ENCODE measurements at regions of chr15 and their contacts with region 1.

Region 1: DNA sequence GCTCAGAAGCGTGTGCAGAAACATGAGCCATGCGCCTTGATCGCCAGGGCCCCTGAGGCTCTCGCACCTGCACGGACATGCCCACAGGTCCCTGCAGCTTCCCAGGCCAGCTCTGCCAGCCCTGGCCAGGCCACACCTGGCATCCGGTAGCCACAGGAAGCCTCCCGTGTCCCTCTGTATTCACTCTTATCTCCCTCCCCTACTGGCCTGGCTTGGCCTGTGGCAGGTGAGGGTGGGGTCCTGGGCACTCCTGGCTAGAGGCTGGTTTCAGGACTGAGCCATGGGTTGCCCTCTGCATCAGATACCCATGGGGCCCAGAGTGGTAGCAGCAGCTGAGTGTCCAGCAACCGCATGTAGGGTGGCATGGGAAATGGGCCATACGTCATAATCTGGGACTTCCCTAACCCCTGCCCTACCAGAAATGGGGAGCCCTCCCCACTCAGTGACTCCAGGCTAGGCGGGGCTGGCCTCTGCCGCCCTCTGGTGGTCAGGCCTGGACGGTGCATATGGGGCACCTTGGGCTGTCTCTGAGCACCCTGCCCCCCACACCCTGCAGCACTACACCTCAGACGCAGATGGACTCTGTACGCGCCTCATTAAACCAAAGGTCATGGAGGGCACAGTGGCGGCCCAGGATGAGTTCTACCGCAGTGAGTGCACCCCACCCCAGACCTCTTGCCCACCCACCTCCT is 12.6 kb upstream of the LMAN1L start:
- DNase-seq: peak; percentile 94
- H3K4me3 Mint-ChIP-seq: peak overlapping the region; percentile 46
- H3K27ac Mint-ChIP-seq: peak overlapping the region; percentile 95
- H3K4me1 Mint-ChIP-seq: peaks cover 56% of the 10 kb centered on the region
- H3K27me3 Mint-ChIP-seq: no peaks in the 10 kb centered on the region

Region 2: GRCh38 chr15:73550190-73550589 is 1249.8 kb before region 1 on chr15:
- CTCF ChIA-PET with region 1: no interaction called
- intact Hi-C with region 1: no loop called
- DNase-seq: no peak
- H3K4me3 Mint-ChIP-seq: no peak overlapping the region
- H3K27ac Mint-ChIP-seq: no peak overlapping the region
- H3K4me1 Mint-ChIP-seq: no peaks in the 10 kb centered on the region
- H3K27me3 Mint-ChIP-seq: no peaks in the 10 kb centered on the region

Region 3: GRCh38 chr15:74781431-74782258 is 18.4 kb before region 1 on chr15 and contains the start of gene CSK:
- CTCF ChIA-PET with region 1: interaction called, 1,193 read pairs
- intact Hi-C with region 1: loop called (anchors 1 kb)
- DNase-seq: peak; percentile 74
- H3K4me3 Mint-ChIP-seq: peak within 1 kb of the TSS; percentile 93
- H3K27ac Mint-ChIP-seq: peak within 1 kb of the TSS; percentile 99
- H3K4me1 Mint-ChIP-seq: peaks cover 46% of the 10 kb centered on the region
- H3K27me3 Mint-ChIP-seq: no peaks in the 10 kb centered on the region
- total RNA-seq, gene CSK: 272 to 282 TPM

Region 4: GRCh38 chr15:74787251-74788041 is 12.6 kb before region 1 on chr15:
- CTCF ChIA-PET with region 1: interaction called, 1,193 read pairs
- intact Hi-C with region 1: loop called (anchors 1 kb)
- DNase-seq: peak; percentile 98
- H3K4me3 Mint-ChIP-seq: peak overlapping the region; percentile 93
- H3K27ac Mint-ChIP-seq: peak overlapping the region; percentile 99
- H3K4me1 Mint-ChIP-seq: peaks cover 55% of the 10 kb centered on the region
- H3K27me3 Mint-ChIP-seq: no peaks in the 10 kb centered on the region

Region 5: GRCh38 chr15:74835307-74835823 is 35.4 kb after region 1 on chr15:
- CTCF ChIA-PET with region 1: interaction called, 6 read pairs
- intact Hi-C with region 1: loop called (anchors 2 kb)
- DNase-seq: peak; percentile 72
- H3K4me3 Mint-ChIP-seq: no peak overlapping the region
- H3K27ac Mint-ChIP-seq: no peak overlapping the region
- H3K4me1 Mint-ChIP-seq: peaks cover 3% of the 10 kb centered on the region
- H3K27me3 Mint-ChIP-seq: no peaks in the 10 kb centered on the region

Region 6: DNA sequence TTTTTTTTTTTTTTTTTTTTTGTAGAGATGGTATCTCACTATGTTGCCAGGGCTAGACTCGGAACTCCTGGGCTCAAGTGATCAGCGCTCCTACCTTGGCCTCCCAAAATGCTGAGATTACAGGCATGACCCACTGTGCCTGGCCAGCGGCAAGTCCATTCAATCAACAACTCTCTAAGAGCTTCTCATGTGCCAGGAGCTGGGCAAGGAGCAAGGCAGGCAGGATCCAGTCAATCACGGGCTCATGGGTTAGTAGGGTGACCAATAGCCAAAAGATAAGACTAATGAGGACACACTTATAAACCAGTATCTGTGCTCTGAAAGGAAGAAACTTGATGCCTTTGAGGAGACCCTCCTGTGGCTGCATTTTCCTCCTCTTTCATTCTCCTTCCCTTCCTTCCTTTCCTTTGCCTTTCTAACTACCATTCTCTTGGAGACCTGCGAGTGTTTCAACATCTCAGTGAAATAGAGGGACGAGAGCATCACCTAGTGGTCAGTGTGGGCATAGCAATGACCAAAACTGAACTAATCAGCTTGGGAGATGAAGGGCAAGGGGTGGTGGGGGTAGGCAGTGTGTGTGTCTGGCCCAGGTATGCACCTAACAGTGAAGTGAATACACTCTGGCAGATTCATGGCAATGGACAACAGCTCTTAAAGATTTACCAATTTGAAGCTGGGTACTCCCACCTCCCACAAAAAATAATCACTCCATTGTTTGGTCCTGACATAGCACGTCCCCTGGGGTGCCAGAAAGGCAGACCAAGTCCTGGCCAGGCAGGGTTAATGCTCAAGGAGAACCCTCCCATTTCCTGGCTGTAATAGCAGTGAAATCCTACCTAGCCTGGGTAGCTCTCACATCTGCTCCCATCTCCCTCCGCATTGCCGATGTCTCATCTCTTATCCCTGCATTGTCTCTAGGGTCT is 150.3 kb after region 1 on chr15:
- CTCF ChIA-PET with region 1: interaction called, 4 read pairs
- intact Hi-C with region 1: loop called (anchors 1 kb)
- DNase-seq: peak; percentile 92
- H3K4me3 Mint-ChIP-seq: no peak overlapping the region
- H3K27ac Mint-ChIP-seq: no peak overlapping the region
- H3K4me1 Mint-ChIP-seq: peaks cover 10% of the 10 kb centered on the region
- H3K27me3 Mint-ChIP-seq: no peaks in the 10 kb centered on the region

Measured in activated naive CD4-positive, alpha-beta T cell treated with anti-CD3 and anti-CD28 coated beads for 36 hours (primary cell).